HEK293 (cell line): ENCODE measurements at regions of chr14 and their contacts with region 1.

Region 1: GRCh38 chr14:91996948-91997371 is 42.9 kb downstream of the TRIP11 start:
- H3K4me3 ChIP-seq: no peak overlapping the region
- H3K27ac ChIP-seq: no peak overlapping the region
- H3K4me1 ChIP-seq: no peaks in the 10 kb centered on the region
- CTCF ChIP-seq: no peak

Region 2: GRCh38 chr14:91985521-91986255 is 11.3 kb before region 1 on chr14:
- CTCF ChIA-PET with region 1: interaction called, 14 read pairs
- POLR2A ChIA-PET with region 1: no interaction called
- H3K4me3 ChIP-seq: no peak overlapping the region
- H3K27ac ChIP-seq: no peak overlapping the region
- H3K4me1 ChIP-seq: no peaks in the 10 kb centered on the region
- CTCF ChIP-seq: no peak